ENCODE measurements at regions of chr10 and their contacts with region 1.

Region 1: GRCh38 chr10:96089670-96090462 is 40.2 kb upstream of the ZNF518A start:
- DNase-seq: peak; percentile 85 to 98 (median 90)

Region 2: DNA sequence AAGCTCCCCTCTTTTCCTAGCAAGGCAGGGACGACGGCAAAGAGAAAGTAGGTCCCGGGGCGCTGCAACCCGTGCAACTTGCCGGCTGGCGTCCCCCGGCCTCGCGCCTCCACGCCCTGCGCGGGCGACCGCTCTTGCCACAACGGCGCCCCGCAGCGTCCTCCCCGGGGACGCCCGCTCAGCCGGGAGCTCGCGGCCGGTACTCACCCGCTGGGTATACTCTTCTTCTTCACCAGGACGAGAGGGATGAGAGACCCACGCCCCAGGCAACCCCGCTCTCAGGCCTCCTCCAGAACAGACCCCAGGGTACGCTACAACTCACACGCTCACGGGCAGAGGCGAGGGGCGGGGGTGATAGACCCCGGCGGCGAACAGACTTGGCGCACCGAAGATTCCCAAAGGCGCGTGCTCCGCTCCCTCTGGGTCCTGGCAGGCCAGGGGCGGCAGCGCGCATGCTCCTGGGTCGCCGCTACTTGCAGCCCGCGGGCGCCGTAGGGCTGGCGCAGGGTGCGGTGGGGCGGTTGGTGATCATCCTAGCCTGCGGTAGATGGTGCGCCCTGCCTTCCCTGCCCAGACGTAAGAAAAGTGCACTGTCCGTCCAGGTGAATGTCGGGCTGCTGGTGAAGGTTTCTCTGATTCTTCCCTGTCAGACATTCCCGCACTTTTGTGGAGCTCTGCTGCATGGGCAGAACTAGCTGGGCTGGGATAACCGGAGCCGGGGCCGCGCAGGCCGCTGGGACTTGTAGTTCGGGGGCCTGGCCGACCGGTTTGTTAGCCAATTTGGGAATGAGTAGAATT is 182.2 kb before region 1 on chr10 and contains the start of gene CC2D2B:
- intact Hi-C with region 1: loop called (anchors 2 kb)
- DNase-seq: peak; percentile 81 to 98 (median 87)

Region 3: DNA sequence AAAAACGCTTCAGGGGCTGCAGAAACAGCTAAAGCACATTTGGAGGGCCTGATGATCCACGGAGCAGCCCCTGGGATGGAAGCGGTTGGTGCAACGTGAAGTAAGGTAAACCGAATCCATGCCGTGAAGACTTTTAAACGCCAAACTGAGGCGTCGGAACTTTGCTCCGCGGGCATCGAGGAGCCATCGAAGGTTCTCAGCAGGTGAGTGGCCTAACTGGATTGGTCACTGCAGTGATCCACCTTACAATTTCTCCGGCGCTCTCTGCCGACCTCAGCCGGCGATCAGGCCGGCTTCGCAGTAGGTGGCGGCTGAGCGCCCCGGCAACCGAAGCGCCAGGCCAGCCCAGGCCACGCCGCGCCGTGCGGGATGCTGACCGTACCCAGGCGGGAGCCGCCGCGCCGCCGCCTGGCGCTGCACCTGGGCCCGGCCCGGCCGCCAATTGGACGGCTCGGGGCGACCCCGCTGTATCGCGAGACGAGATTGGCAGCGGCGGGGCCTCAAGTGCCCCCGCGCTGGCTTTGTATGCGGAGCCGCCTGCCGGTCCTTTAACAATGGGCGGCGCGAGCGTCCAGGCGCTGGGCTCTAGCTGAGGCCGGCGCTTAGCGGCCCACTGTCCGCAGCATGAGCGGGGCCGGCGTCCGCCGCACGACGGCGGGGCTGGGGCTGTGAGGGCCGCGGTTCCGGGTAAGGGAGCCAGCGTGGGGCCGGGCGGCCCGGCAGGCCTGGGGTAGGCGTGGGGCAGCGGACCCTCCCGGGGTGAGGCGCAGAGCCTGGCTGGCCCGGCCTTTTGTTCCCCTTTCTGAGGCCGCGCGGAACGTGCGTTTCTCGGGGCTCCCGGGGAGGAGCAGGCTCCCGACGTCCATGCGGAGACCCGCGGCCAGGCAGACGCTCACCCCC is 46.6 kb before region 1 on chr10 and contains the start of gene CCNJ:
- intact Hi-C with region 1: loop called (anchors 2 kb)
- DNase-seq: peak; percentile 69 to 97 (median 84)

Region 4: DNA sequence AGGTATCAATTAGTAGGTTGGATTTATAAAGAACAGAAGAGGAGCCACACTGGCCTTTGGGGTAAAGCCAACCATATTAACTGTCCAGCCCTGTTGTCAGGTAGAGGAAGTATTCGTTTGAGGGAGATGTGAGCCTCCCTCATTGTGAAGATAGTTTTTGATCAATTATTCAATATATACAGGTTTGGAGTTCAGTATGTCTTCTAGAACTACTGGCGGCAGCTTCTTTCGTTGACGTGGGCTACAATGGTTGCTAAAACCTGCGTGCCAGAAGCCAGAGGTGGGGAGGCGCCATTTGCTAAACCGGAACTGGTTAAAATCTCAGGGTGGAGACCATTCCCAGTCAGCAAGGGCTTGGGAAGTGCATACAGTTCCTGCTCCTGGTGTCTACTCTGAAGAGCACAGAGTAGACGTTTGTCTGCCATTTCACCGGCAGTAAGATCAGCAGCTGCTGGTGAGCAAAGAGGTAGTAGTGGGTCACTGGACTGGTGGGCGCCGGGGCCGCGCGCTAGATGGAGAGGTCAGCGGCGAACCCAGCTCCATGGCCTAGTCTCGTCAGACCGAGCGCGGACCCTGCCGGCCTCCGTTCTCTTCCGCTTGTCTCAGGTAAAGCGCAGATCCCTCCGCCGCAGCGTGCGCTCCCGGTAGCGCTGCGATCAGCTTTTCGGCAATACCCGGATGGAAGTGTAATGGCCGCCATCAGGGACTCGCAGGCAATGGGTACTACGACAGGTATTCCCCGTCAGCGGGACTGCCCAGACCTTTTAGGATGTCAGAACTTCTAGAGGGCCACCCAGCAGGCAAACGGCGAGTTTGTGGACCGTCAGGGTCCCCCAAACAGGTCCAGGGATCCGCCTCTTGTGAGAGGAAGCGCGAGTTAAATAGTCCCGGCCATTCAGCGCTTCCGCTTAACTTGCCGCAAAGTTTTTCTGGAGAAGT is 39.8 kb after region 1 on chr10 and contains the start of gene ZNF518A:
- intact Hi-C with region 1: loop called (anchors 1 kb)
- DNase-seq: peak; percentile 82 to 97 (median 89)

Region 5: DNA sequence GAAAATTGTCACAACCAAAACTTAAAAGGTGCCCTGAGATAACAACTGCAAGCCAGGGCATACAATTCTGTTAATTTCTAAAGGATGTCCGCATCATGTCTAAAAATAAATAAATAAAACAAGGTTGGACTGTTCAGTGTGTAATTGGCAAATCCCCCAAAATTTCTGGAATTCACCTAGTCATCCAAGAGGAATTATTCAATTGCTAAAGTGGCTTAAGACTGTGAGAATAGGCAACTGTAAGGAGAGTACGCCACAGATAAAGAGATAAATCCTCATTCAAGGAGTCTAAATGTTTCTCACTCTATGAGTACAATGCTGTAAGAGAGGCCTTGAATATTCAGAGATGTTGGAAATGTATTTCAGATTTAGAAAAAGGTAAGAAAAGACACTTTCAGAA is 593.2 kb after region 1 on chr10:
- intact Hi-C with region 1: no loop called
- DNase-seq: no peak

Measured in posterior cingulate gyrus (tissue), 11 donors.